Activated T-helper 1 cell treated with anti-CD3 and anti-CD28 coated beads, Interleukin-12 subunit alpha, Interleukin-12 subunit beta, Interleukin-2, Interleukin-4 antibody, amounts not matched to agents 30 ng/mL and 10 ng/mL and 1 ng/mL, durations not matched to agents 14 hours and 24 hours and 36 hours (primary cell): ENCODE measurements at regions of chr17 and their contacts with region 1.

Region 1: DNA sequence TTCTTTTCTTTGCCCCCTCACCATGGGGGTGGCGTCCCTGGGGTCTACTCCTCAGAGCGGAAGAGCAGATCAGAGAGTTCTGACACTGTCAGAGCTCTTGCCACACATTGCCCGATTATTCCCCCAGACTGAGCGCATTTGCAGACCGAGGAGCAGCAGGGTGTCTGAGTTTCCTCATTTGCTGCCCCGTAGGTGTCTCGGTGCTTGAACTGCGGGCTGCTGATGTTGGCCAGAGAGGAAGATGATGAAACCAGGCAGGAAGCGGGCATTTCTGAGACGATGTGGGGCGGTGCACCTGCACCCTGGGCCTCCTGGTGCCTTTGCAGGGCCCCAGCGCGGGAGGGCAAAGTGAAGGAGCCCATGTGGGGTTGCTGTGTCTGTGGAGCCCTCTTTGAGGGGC is 55.2 kb downstream of the ARSG start:
- DNase-seq: peak; percentile 64
- H3K4me3 Mint-ChIP-seq: peak overlapping the region; percentile 67
- H3K27ac Mint-ChIP-seq: peak overlapping the region; percentile 92
- H3K4me1 Mint-ChIP-seq: peaks cover 72% of the 10 kb centered on the region
- H3K27me3 Mint-ChIP-seq: no peaks in the 10 kb centered on the region

Region 2: DNA sequence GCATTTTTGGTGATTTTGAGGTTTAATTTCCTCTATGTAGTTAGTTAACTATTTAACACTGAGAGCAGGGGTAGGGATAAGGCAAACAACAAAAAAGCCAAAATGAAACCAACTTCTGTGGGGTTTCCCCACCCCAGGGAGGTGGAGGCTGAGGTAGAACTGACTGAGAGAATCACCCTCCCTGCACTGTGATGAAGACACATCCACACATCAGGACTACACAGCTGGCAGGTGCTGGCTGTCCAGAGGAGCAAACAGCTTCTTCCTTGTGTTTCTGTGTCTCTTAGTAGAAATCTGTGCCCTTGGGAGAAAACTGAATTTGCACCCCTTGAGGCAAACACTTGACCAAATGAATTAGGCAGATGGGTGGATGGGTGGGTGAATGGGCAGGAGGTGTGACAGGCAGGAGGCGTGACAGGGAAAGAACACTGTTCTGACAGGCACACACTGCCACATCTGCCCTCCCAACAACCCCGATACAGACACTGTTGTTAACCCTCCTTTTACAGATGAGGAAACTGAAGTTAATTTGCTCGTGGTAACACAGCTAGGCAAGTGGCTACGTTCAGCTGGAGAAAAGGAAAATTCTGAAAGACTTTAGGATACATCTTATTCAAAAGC is 161.5 kb before region 1 on chr17:
- intact Hi-C with region 1: loop called (anchors 5 kb)
- DNase-seq: peak; percentile 70
- H3K4me3 Mint-ChIP-seq: peak overlapping the region; percentile 51
- H3K27ac Mint-ChIP-seq: peak overlapping the region; percentile 53
- H3K4me1 Mint-ChIP-seq: peaks cover 57% of the 10 kb centered on the region
- H3K27me3 Mint-ChIP-seq: peaks cover 10% of the 10 kb centered on the region

Region 3: GRCh38 chr17:68247445-68248198 is 98.8 kb before region 1 on chr17 and contains the start of gene AMZ2:
- intact Hi-C with region 1: loop called (anchors 2 kb)
- DNase-seq: peak; percentile 98
- H3K4me3 Mint-ChIP-seq: peak within 1 kb of the TSS; percentile 88
- H3K27ac Mint-ChIP-seq: peak within 1 kb of the TSS; percentile 96
- H3K4me1 Mint-ChIP-seq: peaks cover 49% of the 10 kb centered on the region
- H3K27me3 Mint-ChIP-seq: no peaks in the 10 kb centered on the region
- total RNA-seq, gene AMZ2: 67.3 and 75.7 TPM in 2 replicates

Region 4: DNA sequence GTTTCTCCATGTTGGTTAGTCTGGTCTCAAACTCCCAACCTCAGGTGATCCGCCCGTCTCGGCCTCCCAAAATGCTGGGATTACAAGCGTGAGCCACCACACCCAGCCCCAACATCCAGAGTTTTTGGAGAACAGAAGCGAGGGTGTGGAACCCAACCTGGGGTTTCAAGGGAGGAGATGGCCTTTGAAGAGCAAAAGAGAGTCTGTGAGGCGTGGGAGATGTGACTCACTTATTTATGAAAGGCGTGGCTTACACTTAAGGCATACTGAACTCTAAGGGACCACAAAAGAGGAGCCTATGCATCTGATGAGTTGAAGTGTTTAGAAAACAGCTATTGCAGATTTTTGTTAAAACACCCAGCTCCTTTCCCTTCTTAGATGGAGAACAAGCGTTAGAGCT is 36.3 kb before region 1 on chr17:
- intact Hi-C with region 1: loop called (anchors 2 kb)
- DNase-seq: peak; percentile 20
- H3K4me3 Mint-ChIP-seq: no peak overlapping the region
- H3K27ac Mint-ChIP-seq: no peak overlapping the region
- H3K4me1 Mint-ChIP-seq: peaks cover 32% of the 10 kb centered on the region
- H3K27me3 Mint-ChIP-seq: no peaks in the 10 kb centered on the region

Region 5: GRCh38 chr17:68327823-68328570 is 18.5 kb before region 1 on chr17:
- intact Hi-C with region 1: no loop called
- DNase-seq: no peak
- H3K4me3 Mint-ChIP-seq: no peak overlapping the region
- H3K27ac Mint-ChIP-seq: peak overlapping the region; percentile 25
- H3K4me1 Mint-ChIP-seq: peaks cover 21% of the 10 kb centered on the region
- H3K27me3 Mint-ChIP-seq: peaks cover 2% of the 10 kb centered on the region

Region 6: DNA sequence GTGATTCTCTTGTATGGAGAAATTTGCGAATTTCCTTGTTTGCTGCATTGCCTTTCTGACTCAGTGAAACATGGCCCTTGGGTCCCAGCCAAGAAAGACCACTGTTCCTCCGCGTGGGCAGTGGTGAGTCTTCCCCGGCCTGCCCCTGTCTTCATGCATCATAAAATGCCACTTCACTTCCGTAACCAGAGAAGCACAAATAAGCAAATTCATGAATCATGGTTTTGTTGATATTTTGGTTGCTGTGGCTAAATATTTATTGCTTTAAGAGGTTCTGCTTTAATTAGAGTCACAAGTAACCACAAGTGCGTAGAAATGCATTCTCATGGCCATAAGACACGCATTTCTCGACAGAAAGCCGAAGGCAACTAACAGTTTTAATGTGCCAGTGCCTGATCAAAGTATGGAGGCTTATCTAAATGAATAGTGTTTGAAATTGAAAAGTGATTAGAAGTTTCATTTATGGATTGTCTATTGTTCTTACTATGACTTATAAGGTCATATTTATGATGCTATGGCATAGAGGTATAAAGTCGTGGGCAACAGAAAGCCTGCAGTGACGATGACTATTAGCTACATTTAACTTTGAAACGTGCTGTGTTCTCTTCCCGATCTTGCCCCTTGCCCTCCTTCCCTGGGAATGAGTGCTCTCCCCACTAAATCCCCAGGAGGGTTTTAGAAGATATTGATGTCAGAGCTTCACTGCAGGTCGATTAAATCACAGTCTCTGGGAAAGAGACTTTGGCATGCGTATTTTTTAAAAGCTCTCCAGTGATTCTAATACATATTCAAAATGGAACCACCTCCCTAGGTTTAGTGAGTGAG is 34.8 kb after region 1 on chr17:
- intact Hi-C with region 1: loop called (anchors 5 kb)
- DNase-seq: no peak
- H3K4me3 Mint-ChIP-seq: no peak overlapping the region
- H3K27ac Mint-ChIP-seq: no peak overlapping the region
- H3K4me1 Mint-ChIP-seq: peaks cover 31% of the 10 kb centered on the region
- H3K27me3 Mint-ChIP-seq: peaks cover 8% of the 10 kb centered on the region

Region 7: DNA sequence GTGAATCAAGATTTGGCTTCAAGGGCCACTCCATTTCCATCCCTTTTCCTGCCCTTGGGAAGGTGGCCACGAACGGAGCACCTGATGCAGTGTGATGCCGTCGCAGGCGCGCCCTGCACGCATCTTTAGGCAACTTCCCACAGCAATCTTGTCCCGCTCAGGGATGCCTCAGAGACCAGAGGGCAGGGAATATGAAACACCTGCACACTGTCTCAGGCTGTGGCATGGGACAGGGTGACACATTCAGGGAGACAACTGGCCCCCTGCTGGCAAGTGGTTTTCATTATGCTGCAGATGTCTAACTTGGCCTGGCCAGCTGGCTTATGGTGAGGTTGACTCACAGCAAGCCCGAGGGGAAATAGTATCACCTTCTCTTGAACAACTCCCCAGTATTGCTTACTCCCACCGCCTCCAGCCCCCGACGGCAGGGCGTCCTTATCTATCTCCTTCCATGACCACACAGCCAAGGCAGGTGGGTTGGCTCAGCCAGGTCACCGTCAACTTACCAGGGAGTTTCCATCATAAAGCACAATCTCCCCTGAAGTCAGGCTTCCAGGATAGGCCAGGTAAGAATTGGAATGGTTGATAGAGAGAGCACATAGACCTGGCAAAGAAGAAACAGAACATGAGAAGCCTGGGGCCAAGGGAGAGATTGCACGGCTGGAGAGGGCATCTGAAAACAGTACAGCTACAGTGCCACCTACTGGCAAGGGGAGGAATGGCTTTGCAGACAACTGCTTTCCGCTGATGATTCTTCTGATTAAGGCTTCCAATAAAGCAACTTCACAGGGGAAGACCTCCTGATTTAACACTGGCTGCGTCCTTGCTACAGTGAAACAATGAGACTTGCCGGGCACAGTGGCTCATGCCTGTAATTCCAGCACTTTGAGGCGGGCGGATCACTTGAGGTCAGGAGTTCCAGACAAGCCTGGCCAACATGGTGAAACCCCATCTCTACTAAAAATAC is 89.7 kb after region 1 on chr17:
- intact Hi-C with region 1: loop called (anchors 1 kb)
- DNase-seq: peak; percentile 77
- H3K4me3 Mint-ChIP-seq: peak overlapping the region; percentile 64
- H3K27ac Mint-ChIP-seq: peak overlapping the region; percentile 91
- H3K4me1 Mint-ChIP-seq: peaks cover 64% of the 10 kb centered on the region
- H3K27me3 Mint-ChIP-seq: no peaks in the 10 kb centered on the region